Panc1 (cell line): ENCODE measurements at regions of chr9 and their contacts with region 1.

Region 1: DNA sequence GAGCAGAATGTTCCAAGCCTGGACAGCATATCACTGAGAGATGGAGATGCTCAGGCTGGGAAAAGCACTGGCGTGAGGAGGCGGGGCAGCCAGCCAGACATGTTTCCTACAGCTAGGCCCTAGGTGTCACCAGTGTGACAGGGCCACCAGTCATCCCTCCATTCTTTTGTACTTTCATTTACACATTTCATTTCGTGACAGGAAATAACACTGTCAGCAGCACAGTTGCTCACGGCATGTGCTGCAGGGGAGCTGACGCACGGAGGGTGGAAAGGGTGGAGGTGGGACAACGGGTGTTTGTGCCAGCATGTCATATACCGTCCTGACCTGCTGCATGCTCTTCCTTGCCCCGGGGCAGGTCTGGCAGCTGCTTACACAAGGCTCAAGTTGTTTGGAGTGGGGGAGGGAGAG is 14.8 kb upstream of the CEMIP2 start:
- DNase-seq: no peak
- ATAC-seq: no peak
- H3K4me3 ChIP-seq: no peak overlapping the region
- H3K27ac ChIP-seq: no peak overlapping the region
- H3K4me1 ChIP-seq: no peaks in the 10 kb centered on the region
- H3K27me3 ChIP-seq: no peaks in the 10 kb centered on the region
- CTCF ChIP-seq: no peak

Region 2: GRCh38 chr9:71716138-71716909 is 66.8 kb before region 1 on chr9:
- CTCF ChIA-PET with region 1: no interaction called
- POLR2A ChIA-PET with region 1: no interaction called
- in situ Hi-C with region 1: no loop called
- intact Hi-C with region 1: no loop called
- DNase-seq: no peak
- ATAC-seq: no peak
- H3K4me3 ChIP-seq: no peak overlapping the region
- H3K27ac ChIP-seq: no peak overlapping the region
- H3K4me1 ChIP-seq: no peaks in the 10 kb centered on the region
- H3K27me3 ChIP-seq: no peaks in the 10 kb centered on the region
- CTCF ChIP-seq: peak; percentile 39; the same call in 1 of the 2 replicates

Region 3: GRCh38 chr9:71737455-71737854 is 45.7 kb before region 1 on chr9:
- CTCF ChIA-PET with region 1: no interaction called
- POLR2A ChIA-PET with region 1: no interaction called
- in situ Hi-C with region 1: no loop called
- intact Hi-C with region 1: no loop called
- DNase-seq: no peak
- ATAC-seq: no peak
- H3K4me3 ChIP-seq: no peak overlapping the region
- H3K27ac ChIP-seq: no peak overlapping the region
- H3K4me1 ChIP-seq: no peaks in the 10 kb centered on the region
- H3K27me3 ChIP-seq: no peaks in the 10 kb centered on the region
- CTCF ChIP-seq: no peak

Region 4: DNA sequence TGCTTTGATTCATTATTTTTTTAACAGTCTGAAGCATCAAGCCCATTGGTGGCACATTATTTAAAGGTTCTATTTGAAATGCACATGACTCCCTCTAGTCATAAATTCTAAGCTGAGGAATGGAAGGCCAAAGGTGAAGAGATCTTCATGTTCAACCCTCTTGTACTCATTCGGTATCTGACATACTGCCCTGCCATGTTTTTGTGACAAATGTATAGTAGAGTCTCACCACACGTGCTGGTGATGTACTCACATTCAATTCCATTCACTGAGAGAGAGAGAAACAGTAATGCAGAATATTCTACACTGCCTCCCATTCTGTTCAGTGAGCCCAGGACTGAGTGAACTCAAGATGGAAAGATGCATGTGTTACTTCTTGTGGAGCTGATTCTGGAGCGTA is 464.4 kb after region 1 on chr9:
- CTCF ChIA-PET with region 1: no interaction called
- POLR2A ChIA-PET with region 1: no interaction called
- in situ Hi-C with region 1: no loop called
- intact Hi-C with region 1: loop called (anchors 10 kb)
- DNase-seq: no peak
- ATAC-seq: no peak
- H3K4me3 ChIP-seq: no peak overlapping the region
- H3K27ac ChIP-seq: no peak overlapping the region
- H3K4me1 ChIP-seq: no peaks in the 10 kb centered on the region
- H3K27me3 ChIP-seq: no peaks in the 10 kb centered on the region
- CTCF ChIP-seq: no peak